Activated CD8-positive, alpha-beta T cell treated with anti-CD3 and anti-CD28 coated beads for 36 hours (primary cell): ENCODE measurements at regions of chr6 and their contacts with region 1.

Region 1: DNA sequence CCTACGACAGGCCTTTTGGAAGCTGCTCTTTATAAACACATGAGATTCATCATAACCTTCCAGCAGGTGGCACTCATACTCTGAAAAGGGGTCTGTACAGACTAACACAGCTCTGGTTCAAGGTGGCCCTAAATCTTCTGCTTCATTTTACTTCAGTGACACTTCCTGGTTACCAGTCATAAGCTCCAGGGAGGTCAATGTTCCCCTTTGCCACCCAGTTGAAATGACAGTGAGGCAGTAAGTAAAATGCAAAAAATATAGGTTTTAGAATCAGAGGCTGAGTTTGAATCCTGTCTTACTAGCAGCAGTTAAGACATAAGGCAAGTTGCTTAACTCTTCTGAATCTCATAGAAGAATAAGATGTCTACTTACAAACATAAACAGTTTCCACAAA is 132.8 kb downstream of the CDK19 start:
- DNase-seq: peak; percentile 79
- ATAC-seq: peak; percentile 99
- H3K4me3 Mint-ChIP-seq: no peak overlapping the region
- H3K27ac Mint-ChIP-seq: no peak overlapping the region
- H3K4me1 Mint-ChIP-seq: peaks cover 18% of the 10 kb centered on the region
- H3K27me3 Mint-ChIP-seq: no peaks in the 10 kb centered on the region
- CTCF ChIP-seq: peak; percentile 84

Region 2: DNA sequence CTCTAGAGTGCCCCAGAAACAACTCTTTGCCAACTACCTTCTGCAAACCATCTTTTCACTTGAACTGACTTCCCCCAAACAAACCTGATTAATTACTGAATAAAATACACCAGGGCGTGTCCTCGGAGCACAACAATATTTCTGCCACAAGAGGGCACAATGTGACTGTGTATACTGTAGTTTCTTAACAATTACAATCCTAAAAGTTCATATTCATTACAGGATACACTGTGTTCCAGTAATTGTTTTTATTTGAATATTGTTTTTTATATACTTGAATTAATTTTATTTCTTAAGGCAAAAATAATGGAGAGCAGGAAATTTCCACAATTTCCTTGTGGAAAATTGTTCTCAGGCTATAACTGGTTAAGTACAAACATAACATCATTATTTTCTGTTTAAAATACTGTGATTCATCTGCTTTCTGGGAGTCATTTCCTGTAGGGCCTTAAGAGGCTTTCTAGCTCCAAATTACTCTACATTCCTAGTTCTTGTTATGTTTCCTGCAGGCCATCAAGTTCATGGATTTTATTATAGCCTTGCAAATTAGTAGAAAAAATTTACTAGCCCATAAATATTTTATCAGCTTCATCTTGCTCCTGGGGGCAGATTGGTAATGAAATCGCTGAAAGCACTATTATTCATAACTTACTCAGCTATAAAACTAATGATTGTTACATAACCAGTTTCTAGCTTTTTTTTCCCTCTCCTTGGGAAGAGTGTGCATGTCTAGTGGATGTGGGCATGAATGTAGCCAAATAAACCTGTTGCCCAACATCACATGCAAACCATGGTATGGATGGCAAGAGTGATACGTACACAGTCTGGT is 154.1 kb before region 1 on chr6:
- CTCF ChIA-PET with region 1: interaction called, 11 read pairs
- POLR2A ChIA-PET with region 1: no interaction called
- intact Hi-C with region 1: no loop called
- DNase-seq: peak; percentile 73
- ATAC-seq: peak; percentile 67
- H3K4me3 Mint-ChIP-seq: no peak overlapping the region
- H3K27ac Mint-ChIP-seq: no peak overlapping the region
- H3K4me1 Mint-ChIP-seq: peaks cover 6% of the 10 kb centered on the region
- H3K27me3 Mint-ChIP-seq: peaks cover 5% of the 10 kb centered on the region
- CTCF ChIP-seq: peak; percentile 92

Region 3: DNA sequence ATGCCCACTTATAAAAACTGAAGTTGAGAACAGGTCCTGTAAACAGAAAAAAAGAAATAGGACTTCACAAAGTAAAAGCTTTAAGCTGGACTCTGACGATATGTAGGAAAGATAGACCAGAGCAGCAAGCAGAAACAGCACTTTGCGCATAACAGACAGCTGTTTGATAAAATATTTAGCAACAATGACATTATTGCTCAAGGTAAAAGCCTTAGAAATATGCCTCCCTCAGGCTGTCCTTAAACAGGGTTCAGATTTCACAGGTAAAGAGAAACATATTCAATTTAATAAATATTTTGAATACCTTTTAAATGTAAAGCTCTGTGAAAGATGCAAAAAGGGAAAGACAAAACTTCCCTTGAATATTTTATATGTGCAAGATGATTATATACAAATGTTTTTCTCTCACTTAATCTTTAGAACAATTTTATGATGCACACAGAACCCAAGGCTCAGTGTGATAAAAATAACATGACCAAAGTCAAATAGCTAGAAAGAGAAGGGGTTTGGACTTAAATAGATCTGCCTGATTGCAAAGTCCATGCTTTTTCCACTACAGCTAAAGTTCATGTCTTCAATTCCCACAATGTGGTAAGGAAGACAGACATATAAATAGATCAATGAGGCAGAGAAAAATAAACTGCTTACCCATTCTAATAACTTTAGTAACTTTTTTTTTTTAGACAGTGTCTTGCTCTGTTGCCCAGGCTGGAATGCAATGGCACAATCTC is 11.2 kb before region 1 on chr6:
- CTCF ChIA-PET with region 1: interaction called, 16 read pairs
- POLR2A ChIA-PET with region 1: no interaction called
- intact Hi-C with region 1: no loop called
- DNase-seq: no peak
- ATAC-seq: no peak
- H3K4me3 Mint-ChIP-seq: no peak overlapping the region
- H3K27ac Mint-ChIP-seq: no peak overlapping the region
- H3K4me1 Mint-ChIP-seq: no peaks in the 10 kb centered on the region
- H3K27me3 Mint-ChIP-seq: no peaks in the 10 kb centered on the region
- CTCF ChIP-seq: no peak

Region 4: DNA sequence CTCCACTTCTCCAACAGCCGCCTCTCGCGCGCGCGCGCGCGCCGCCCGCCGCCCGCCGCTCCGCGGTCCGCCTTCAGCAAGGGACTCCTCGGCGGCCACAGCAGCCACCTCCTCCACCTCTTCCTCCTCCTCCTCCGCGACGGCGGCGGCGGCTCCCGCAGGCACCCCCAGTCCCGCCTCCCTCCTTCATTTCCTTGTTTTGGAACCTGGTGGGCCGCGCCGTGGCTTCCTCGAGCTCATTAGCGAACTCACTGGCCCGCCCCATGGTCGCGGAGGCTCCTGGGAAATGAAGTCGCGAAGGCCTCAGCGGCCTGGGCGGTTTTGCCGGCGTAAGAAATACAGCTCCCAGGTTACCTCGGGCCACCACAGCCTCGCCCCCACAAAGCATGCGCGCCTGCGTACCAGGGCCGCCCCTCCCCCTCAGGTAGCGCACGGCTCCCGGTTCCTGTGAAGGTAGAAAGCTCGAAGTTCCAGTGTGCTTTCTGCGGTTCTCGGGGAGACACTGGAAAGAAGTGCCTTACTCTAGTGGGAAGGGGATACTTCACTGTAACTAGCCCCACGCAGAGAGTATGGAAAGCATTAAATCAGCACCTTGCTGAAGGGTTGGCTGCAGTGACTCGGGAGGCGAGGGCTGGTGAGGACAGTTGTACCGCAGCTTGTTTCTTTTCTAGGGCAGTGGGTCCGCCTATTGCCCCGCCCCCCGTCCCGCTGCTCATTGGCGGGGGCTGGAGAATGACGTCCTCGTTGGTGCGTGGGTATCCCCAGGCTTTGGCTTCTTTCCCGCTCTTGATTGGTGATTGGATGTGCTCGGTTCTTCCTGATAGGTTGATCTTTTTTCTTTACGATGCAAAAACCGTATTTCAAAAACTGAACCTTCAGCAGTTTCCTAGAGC is 133.0 kb after region 1 on chr6 and contains the start of gene CDK19:
- CTCF ChIA-PET with region 1: interaction called, 14 read pairs
- POLR2A ChIA-PET with region 1: no interaction called
- intact Hi-C with region 1: no loop called
- DNase-seq: peak; percentile 99
- ATAC-seq: peak; percentile 82
- H3K4me3 Mint-ChIP-seq: peak within 1 kb of the TSS; percentile 99
- H3K27ac Mint-ChIP-seq: peak within 1 kb of the TSS; percentile 99
- H3K4me1 Mint-ChIP-seq: peaks cover 28% of the 10 kb centered on the region
- H3K27me3 Mint-ChIP-seq: peaks cover 3% of the 10 kb centered on the region
- CTCF ChIP-seq: no peak
- total RNA-seq, gene CDK19: 11.8 to 13.1 TPM

Region 5: DNA sequence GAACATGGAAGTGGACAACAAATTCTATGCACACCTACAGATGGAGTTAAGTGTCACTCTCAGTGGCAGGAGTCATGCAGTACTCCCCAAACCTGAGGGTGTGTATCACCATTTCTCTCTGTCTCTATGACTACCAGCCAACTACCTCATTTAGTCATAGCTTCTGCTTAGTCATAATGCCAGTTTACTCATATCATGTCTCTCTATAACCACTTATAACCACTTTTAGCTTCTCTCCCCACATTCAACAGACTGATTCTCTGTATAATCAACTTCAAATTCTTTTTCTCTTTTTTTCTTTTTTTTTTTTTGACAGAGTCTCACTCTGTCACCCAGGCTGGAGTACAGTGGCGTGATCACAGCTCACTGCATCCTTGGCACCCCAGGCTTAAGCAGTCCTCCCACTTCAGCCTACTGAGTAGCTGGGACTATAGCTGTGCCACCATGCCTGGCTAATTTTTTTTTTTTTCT is 262.3 kb after region 1 on chr6:
- CTCF ChIA-PET with region 1: interaction called, 29 read pairs
- POLR2A ChIA-PET with region 1: interaction called, 5 read pairs
- intact Hi-C with region 1: loop called (anchors 1 kb)
- DNase-seq: peak; percentile 67
- ATAC-seq: peak; percentile 98
- H3K4me3 Mint-ChIP-seq: no peak overlapping the region
- H3K27ac Mint-ChIP-seq: peak overlapping the region; percentile 70
- H3K4me1 Mint-ChIP-seq: peaks cover 7% of the 10 kb centered on the region
- H3K27me3 Mint-ChIP-seq: no peaks in the 10 kb centered on the region
- CTCF ChIP-seq: no peak

Region 6: GRCh38 chr6:110949679-110950285 is 267.3 kb after region 1 on chr6:
- CTCF ChIA-PET with region 1: interaction called, 29 read pairs
- POLR2A ChIA-PET with region 1: interaction called, 5 read pairs
- intact Hi-C with region 1: loop called (anchors 1 kb)
- DNase-seq: no peak
- ATAC-seq: no peak
- H3K4me3 Mint-ChIP-seq: no peak overlapping the region
- H3K27ac Mint-ChIP-seq: no peak overlapping the region
- H3K4me1 Mint-ChIP-seq: peaks cover 2% of the 10 kb centered on the region
- H3K27me3 Mint-ChIP-seq: no peaks in the 10 kb centered on the region
- CTCF ChIP-seq: peak; percentile 69

Region 7: DNA sequence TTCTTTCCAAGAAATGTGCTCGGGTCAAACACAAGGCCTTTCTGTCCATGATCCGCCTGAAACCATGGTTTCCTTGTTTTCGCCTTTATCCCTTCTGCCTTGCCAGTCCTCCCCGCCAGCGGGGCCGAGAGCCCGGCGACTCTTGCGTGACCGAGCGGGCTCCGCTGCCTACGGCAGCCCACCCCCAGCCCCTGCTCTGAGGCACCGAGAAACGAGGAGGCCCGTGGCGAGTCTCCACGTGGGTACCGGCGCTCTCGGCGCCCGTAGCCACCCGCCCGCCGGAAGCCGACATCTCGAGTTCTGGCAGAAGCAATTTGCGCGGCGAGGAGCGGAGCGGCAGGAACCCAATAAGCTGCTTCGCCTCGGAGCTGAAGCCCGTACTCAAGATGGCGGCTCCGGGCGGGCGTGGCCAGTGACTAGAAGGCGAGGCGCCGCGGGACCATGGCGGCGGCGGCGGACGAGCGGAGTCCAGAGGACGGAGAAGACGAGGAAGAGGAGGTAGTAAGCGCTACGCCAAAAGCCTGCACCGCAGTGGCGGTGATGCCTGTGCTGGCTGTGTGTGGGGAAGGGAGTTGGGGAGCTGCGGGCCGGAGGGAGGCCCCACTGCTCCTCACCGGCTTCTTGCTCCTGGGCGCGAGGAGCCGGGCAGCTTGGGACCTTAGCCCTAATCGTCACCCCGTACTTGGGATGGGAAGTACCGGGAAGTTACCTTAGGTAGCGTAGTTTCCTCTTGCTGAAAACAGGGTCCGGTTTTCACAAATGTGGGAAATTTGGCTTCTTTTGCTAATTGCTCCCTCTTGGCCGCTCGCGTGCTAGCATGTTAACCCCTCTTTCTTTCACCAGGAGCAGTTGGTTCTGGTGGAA is 276.1 kb after region 1 on chr6 and contains the start of gene GTF3C6:
- CTCF ChIA-PET with region 1: interaction called, 26 read pairs
- POLR2A ChIA-PET with region 1: interaction called, 3 read pairs
- intact Hi-C with region 1: no loop called
- DNase-seq: peak; percentile 97
- ATAC-seq: peak; percentile 99
- H3K4me3 Mint-ChIP-seq: peak within 1 kb of the TSS; percentile 93
- H3K27ac Mint-ChIP-seq: peak within 1 kb of the TSS; percentile 99
- H3K4me1 Mint-ChIP-seq: peaks cover 15% of the 10 kb centered on the region
- H3K27me3 Mint-ChIP-seq: no peaks in the 10 kb centered on the region
- CTCF ChIP-seq: no peak
- total RNA-seq, gene GTF3C6: 87.5 to 89.9 TPM